Mammary epithelial cell (primary cell): ENCODE measurements at regions of chr9 and their contacts with region 1.

Region 1: GRCh38 chr9:115313545-115313944 is 195.6 kb upstream of the TNC start:
- DNase-seq: no peak
- H3K4me3 ChIP-seq: no peak overlapping the region
- H3K27ac ChIP-seq: no peak overlapping the region
- H3K4me1 ChIP-seq: no peaks in the 10 kb centered on the region
- H3K27me3 ChIP-seq: no peaks in the 10 kb centered on the region
- CTCF ChIP-seq: no peak

Region 2: DNA sequence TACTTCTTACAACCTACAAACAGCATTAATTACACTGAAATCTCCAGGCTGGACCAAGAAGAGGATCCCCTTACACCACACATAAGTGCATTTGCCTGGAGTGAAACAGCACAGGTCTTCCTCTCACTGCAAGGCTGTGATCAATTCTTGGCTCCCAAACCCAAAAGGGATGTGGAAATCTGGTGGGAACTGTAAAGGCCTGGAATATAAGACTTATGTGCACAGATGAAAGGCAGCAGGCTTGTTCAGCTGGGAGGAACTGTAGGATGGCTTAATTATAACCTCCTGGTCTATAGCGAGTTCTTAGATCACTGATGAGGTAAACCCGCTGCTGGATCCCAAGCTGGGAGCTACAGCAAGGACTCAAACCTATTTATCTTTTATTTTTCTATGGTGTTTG is 12.7 kb before region 1 on chr9:
- CTCF ChIA-PET with region 1: interaction called, 11 read pairs
- dilution Hi-C with region 1: no loop called
- in situ Hi-C with region 1: no loop called
- intact Hi-C with region 1: no loop called
- DNase-seq: no peak
- H3K4me3 ChIP-seq: no peak overlapping the region
- H3K27ac ChIP-seq: no peak overlapping the region
- H3K4me1 ChIP-seq: peaks cover 10% of the 10 kb centered on the region
- H3K27me3 ChIP-seq: no peaks in the 10 kb centered on the region
- CTCF ChIP-seq: no peak